BJ (cell line): ENCODE measurements at regions of chr9 and their contacts with region 1.

Region 1: DNA sequence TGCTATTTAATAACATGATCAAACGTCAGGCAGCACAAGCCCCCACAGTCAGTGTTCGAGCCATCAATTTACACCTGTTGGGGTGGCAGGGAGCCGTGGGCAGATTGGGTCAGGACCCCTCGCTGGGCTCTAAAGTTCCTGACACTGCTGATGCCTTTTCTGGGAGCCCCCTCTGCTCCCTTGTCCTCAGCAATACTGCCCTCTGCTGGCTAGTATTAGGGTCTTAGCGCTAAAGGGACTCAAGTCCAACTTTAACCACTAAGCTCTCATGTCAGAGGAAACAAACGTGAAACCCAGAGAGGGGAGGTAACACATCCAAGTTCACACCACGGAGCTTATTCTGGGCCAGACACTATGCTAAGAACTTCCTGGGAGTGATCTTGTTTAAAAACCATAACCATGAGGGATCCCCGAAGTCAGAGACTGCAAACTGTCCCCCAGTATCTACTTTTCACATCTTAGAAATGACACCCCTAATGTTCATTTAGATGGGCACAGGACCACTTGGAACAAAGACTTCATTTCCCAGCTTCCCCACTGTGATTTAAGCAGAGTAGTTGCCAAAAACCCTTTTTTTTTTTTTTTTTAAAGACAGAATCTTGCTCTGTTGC is 20.4 kb downstream of the ANKS6 start:
- DNase-seq: no peak
- H3K4me3 ChIP-seq: no peak overlapping the region
- H3K27me3 ChIP-seq: no peaks in the 10 kb centered on the region
- CTCF ChIP-seq: peak; percentile 81

Region 2: DNA sequence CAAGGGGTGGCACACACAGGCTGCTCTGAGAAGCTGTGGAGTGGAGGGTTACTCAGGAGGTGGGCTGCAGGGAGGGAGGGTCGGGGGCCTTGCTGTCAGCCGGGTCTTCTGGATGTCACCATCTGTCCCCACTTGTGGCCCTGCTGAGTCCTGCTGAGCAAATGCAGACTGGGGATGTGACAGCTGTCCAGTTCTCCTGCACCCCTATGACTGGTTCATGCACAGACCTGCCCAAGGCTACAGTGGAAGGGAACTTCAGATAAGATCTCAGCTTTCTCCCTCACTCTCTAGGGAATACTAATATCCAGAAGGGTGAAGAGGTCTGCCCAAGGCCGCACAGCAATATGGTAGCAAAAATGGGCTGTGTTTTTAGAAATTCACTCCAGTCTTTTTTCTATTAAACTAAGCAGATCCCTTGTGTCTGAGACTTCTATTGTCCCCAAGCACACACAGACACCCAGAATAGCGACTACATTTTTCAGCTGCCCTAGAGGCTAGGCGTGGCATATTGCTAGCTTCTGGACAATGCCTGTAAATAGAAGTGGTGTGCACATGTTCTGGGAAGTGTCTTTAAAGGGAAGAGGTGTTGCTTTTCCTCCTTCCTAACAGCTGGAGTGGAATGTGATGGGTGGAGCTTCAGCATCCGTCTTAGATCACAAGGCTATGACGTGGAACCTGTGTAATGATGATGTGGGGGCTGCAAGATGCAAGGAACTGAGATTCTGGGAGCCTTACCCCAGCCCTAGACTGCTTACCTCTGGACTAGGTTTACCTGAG is 469.4 kb before region 1 on chr9:
- CTCF ChIA-PET with region 1: interaction called, 150 read pairs
- POLR2A ChIA-PET with region 1: no interaction called
- DNase-seq: no peak
- H3K4me3 ChIP-seq: no peak overlapping the region
- H3K27me3 ChIP-seq: no peaks in the 10 kb centered on the region; the same call in 1 of the 2 replicates
- CTCF ChIP-seq: no peak

Region 3: DNA sequence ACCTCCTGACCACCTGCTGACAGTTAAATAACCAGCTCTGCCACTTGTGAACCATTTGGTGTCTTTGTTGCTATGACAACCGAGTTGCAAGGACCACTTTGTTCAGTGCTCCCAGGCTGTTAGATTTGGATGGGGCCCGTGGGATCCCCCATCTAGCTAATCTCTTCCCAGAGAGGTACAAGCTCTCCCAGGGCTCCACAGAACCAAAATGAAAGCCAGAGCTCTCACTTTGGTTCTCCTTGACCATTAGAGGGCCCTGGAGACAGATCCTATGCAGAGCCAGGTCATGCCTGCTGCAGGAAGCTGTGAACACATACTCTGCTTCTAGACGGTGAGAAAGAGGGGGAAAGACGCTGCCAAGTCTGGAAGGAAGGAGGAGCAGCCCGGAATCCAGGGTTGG is 291.8 kb before region 1 on chr9:
- CTCF ChIA-PET with region 1: interaction called, 16 read pairs
- POLR2A ChIA-PET with region 1: no interaction called
- DNase-seq: no peak
- H3K4me3 ChIP-seq: no peak overlapping the region
- H3K27me3 ChIP-seq: no peaks in the 10 kb centered on the region
- CTCF ChIP-seq: peak; percentile 39

Region 4: DNA sequence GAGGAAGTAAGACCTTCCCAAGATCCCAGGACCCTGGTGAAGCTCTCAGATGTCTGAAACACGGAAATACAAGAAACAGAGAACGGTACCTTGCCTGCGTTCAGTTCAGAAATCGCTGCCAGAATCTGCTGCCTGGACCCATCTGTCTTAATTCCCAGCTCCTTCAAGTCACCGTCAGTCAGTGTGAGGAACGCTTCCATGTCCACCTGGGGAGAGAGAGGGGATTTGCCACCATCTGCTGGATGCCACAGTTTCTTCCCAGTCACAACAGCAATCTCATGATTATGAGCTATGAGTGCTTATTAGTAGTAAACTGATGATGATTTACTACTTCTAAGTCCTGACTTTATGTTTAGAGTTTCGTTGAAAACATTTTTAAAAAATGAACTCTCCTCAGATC is 30.5 kb before region 1 on chr9:
- CTCF ChIA-PET with region 1: interaction called, 22 read pairs
- POLR2A ChIA-PET with region 1: no interaction called
- DNase-seq: no peak
- H3K4me3 ChIP-seq: no peak overlapping the region
- H3K27me3 ChIP-seq: no peaks in the 10 kb centered on the region
- CTCF ChIP-seq: no peak

Region 5: DNA sequence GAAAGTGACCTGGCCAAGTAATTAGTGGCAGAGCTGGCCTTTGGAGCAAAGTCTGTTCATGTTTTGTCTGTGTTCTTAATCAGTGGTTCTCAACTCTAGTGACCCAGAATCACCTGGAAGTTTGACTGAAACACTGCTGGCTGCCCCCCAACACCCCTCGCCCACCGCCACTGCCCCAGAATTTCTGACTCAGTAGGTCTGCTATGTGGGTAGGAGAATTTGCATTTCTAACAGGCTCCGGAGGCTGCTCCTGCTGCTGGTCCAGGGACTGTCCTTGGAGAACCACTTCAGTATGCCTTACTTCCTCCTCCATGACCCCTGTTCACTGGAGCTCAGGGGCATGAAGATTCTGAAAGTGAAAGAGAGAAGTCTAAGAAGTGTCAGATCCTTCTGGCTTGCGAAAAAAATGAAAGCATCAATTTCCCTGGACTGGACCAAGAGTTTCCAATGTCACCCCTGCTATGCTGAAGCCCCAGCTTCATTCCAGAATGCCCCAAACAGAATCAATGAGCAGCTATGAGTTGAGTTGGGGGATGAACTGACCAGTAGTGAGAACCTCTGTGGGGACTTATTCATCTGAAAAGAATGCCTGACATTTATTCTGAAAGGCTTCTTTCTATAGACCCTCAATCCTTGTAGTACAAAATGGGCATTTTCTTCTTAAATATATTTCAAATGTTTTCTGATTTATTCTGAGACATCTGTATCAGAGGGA is 146.9 kb after region 1 on chr9:
- CTCF ChIA-PET with region 1: no interaction called
- POLR2A ChIA-PET with region 1: no interaction called
- DNase-seq: no peak
- H3K4me3 ChIP-seq: no peak overlapping the region
- H3K27me3 ChIP-seq: peaks cover 1% of the 10 kb centered on the region
- CTCF ChIP-seq: no peak

Region 6: GRCh38 chr9:98998441-98999151 is 222.7 kb after region 1 on chr9:
- CTCF ChIA-PET with region 1: no interaction called
- POLR2A ChIA-PET with region 1: no interaction called
- DNase-seq: no peak
- H3K4me3 ChIP-seq: no peak overlapping the region
- H3K27me3 ChIP-seq: peaks cover 1% of the 10 kb centered on the region; the same call in 1 of the 2 replicates
- CTCF ChIP-seq: peak; percentile 93